ENCODE measurements at regions of chr12 and their contacts with region 1.

Region 1: GRCh38 chr12:6554168-6555017 is 1.4 kb downstream of the IFFO1 start:
- DNase-seq: peak; percentile 88
- ATAC-seq: peak; percentile 68
- H3K4me3 Mint-ChIP-seq: peak overlapping the region; percentile 91
- H3K27ac Mint-ChIP-seq: peak overlapping the region; percentile 76
- H3K4me1 Mint-ChIP-seq: peaks cover 54% of the 10 kb centered on the region
- H3K27me3 Mint-ChIP-seq: no peaks in the 10 kb centered on the region

Region 2: DNA sequence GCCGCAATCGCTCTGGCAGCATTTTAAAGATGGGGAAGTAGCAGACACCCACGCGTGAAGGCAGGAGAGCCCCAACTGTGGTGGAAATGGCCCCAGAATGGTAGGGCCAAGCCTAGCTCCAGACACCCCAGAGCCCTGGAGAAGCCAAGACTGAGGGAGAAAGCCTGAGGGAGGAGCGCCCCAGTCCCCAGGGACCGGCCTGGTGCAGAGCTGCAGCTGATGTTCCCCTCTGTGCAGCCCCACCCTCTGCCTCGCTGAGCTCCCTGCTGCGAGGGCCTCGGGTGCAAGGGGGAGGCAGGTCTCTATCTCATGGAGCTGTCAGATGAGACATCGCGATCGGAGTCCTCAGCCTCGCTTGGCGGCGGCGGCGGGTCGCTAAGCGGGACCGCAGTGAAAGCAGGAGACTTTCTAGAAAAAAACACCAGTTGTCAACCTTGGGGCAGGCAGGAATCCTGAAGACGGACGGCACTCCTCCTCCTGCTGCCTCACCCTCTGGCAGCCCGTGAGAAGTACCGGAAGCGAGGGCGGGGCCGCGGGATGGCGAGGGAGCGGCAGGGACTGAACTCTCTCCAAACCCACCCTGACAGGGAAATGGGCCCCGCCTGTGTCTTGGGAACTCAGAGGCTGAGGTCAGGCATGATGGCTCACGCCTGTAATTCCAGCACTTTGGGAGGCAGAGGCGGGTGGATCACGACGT is 14.1 kb before region 1 on chr12:
- CTCF ChIA-PET with region 1: interaction called, 141 read pairs
- POLR2A ChIA-PET with region 1: interaction called, 5 read pairs
- intact Hi-C with region 1: loop called (anchors 1 kb)
- DNase-seq: peak; percentile 72
- ATAC-seq: peak; percentile 24
- H3K4me3 Mint-ChIP-seq: peak overlapping the region; percentile 45
- H3K27ac Mint-ChIP-seq: peak overlapping the region; percentile 73
- H3K4me1 Mint-ChIP-seq: peaks cover 53% of the 10 kb centered on the region
- H3K27me3 Mint-ChIP-seq: no peaks in the 10 kb centered on the region

Region 3: GRCh38 chr12:6570264-6570887 is 16.0 kb after region 1 on chr12:
- CTCF ChIA-PET with region 1: interaction called, 11 read pairs
- POLR2A ChIA-PET with region 1: interaction called, 4 read pairs
- intact Hi-C with region 1: loop called (anchors 1 kb)
- DNase-seq: peak; percentile 76
- ATAC-seq: no peak
- H3K4me3 Mint-ChIP-seq: peak overlapping the region; percentile 89
- H3K27ac Mint-ChIP-seq: peak overlapping the region; percentile 66
- H3K4me1 Mint-ChIP-seq: peaks cover 62% of the 10 kb centered on the region
- H3K27me3 Mint-ChIP-seq: no peaks in the 10 kb centered on the region

Region 4: GRCh38 chr12:6662906-6663742 is 108.7 kb after region 1 on chr12 and contains the start of gene ING4:
- CTCF ChIA-PET with region 1: interaction called, 3 read pairs
- POLR2A ChIA-PET with region 1: interaction called, 4 read pairs
- intact Hi-C with region 1: loop called in 1 of 2 experiments (anchors 2 kb)
- DNase-seq: peak; percentile 98
- ATAC-seq: peak; percentile 98
- H3K4me3 Mint-ChIP-seq: peak within 1 kb of the TSS; percentile 84
- H3K27ac Mint-ChIP-seq: peak within 1 kb of the TSS; percentile 91
- H3K4me1 Mint-ChIP-seq: peaks cover 24% of the 10 kb centered on the region
- H3K27me3 Mint-ChIP-seq: no peaks in the 10 kb centered on the region
- total RNA-seq, gene ING4: 14.9 to 17.6 TPM

Measured in activated CD4-positive, alpha-beta T cell treated with anti-CD3 and anti-CD28 coated beads for 36 hours (primary cell).